Breast epithelium (tissue), 4 donors: ENCODE measurements at regions of chr9 and their contacts with region 1.

Region 1: GRCh38 chr9:79989079-79989478 is 417.3 kb downstream of the TLE4 start:
- DNase-seq: no peak
- H3K4me3 ChIP-seq: no peak overlapping the region
- H3K27ac ChIP-seq: no peak overlapping the region
- H3K4me1 ChIP-seq: no peaks in the 10 kb centered on the region
- H3K27me3 ChIP-seq: no peaks in the 10 kb centered on the region
- CTCF ChIP-seq: no peak
- POLR2A ChIP-seq: no peak

Region 2: DNA sequence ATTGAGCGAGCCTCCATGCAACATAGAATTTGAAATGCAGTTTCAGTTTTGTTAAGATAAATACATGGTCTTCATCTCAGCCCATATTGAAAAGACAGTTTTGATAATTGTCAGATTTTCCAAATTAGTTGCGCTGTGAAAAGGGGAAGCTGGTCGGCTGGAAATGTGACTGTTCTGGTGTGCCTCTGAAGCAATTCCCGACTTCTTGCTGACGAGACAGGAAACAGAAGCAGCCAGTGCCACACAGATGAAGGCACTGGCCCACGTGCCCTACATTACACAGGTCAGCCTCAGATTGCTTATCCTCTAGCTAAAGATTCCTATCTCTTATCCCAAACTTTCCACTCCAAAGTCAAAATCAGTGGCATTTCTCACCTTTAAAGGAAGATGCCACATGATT is 631.5 kb before region 1 on chr9:
- intact Hi-C with region 1: no loop called
- DNase-seq: no peak
- H3K4me3 ChIP-seq: no peak overlapping the region
- H3K27ac ChIP-seq: no peak overlapping the region
- H3K4me1 ChIP-seq: no peaks in the 10 kb centered on the region
- H3K27me3 ChIP-seq: no peaks in the 10 kb centered on the region
- CTCF ChIP-seq: no peak
- POLR2A ChIP-seq: no peak

Region 3: GRCh38 chr9:79962836-79963235 is 26.2 kb before region 1 on chr9:
- intact Hi-C with region 1: loop called (anchors 2 kb)
- DNase-seq: no peak
- H3K4me3 ChIP-seq: no peak overlapping the region
- H3K27ac ChIP-seq: no peak overlapping the region
- H3K4me1 ChIP-seq: no peaks in the 10 kb centered on the region
- H3K27me3 ChIP-seq: no peaks in the 10 kb centered on the region
- CTCF ChIP-seq: no peak
- POLR2A ChIP-seq: no peak

Region 4: GRCh38 chr9:79969393-79970145 is 19.5 kb before region 1 on chr9:
- intact Hi-C with region 1: loop called (anchors 2 kb)
- DNase-seq: no peak
- H3K4me3 ChIP-seq: no peak overlapping the region
- H3K27ac ChIP-seq: no peak overlapping the region
- H3K4me1 ChIP-seq: no peaks in the 10 kb centered on the region
- H3K27me3 ChIP-seq: no peaks in the 10 kb centered on the region
- CTCF ChIP-seq: no peak
- POLR2A ChIP-seq: no peak

Region 5: DNA sequence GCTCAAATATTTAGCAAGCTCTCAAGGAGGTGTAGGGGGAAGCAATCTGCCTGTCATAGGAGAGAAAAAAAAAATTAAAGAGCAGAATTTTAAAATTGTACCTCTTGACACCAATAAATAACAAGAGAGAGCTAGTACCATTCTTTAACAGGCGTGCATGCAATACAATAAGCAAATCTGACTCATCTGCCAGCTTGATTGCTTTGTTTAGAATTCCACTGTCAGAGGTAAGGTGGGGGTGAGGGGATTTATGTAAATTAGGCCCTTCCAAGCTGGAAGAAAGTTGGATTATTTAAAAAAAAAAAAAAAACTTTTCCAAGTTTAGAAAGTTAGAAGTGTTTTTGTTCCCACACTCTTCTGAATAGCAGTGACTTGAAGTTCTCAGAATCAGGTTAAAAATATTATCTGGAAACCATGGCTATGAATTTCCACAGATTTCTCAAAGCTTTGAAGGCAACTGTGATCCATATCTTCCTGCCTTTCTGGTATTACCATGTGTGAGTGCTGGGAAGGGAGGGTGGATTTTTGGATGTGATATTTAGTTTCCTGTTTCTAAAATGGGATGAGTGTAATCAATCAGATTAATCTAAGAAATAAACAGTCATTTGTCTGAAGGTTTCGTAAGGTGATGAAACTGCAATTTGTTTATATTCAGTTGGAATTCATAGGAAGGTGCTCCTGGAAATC is 60.2 kb after region 1 on chr9:
- intact Hi-C with region 1: no loop called
- DNase-seq: no peak
- H3K4me3 ChIP-seq: no peak overlapping the region
- H3K27ac ChIP-seq: no peak overlapping the region
- H3K4me1 ChIP-seq: no peaks in the 10 kb centered on the region
- H3K27me3 ChIP-seq: no peaks in the 10 kb centered on the region
- CTCF ChIP-seq: no peak
- POLR2A ChIP-seq: no peak